H1 (cell line): ENCODE measurements at regions of chr6 and their contacts with region 1.

Region 1: GRCh38 chr6:134063966-134064445 is 11.6 kb upstream of the SLC2A12 start:
- DNase-seq: no peak
- H3K4me3 ChIP-seq: no peak overlapping the region
- H3K27ac ChIP-seq: no peak overlapping the region
- H3K4me1 ChIP-seq: peaks cover 2 to 12% (median 10%) of the 10 kb centered on the region in 4 experiments; a peak in 6 of 7 replicates
- H3K27me3 ChIP-seq: no peaks in the 10 kb centered on the region
- CTCF ChIP-seq: peak; percentile 61 to 97 (median 94)
- EP300 ChIP-seq: no peak
- POLR2A ChIP-seq: no peak
- RAD21 ChIP-seq: peak; percentile 75 to 83

Region 2: GRCh38 chr6:133923938-133924593 is 139.9 kb before region 1 on chr6:
- CTCF ChIA-PET with region 1: interaction called, 80 read pairs
- POLR2A ChIA-PET with region 1: no interaction called
- DNase-seq: peak in 1 of 2 experiments; percentile 60
- H3K4me3 ChIP-seq: peak overlapping the region in 1 of 4 experiments; percentile 27; a peak in 1 of 8 replicates
- H3K27ac ChIP-seq: no peak overlapping the region
- H3K4me1 ChIP-seq: peaks cover 0 to 3% (median 0%) of the 10 kb centered on the region in 4 experiments; a peak in 1 of 7 replicates
- H3K27me3 ChIP-seq: no peaks in the 10 kb centered on the region
- CTCF ChIP-seq: peak in 2 of 3 experiments; percentile 77 to 83; a peak in 3 of 4 replicates
- EP300 ChIP-seq: no peak
- POLR2A ChIP-seq: no peak
- RAD21 ChIP-seq: peak; percentile 96

Region 3: GRCh38 chr6:133959667-133960368 is 104.2 kb before region 1 on chr6:
- CTCF ChIA-PET with region 1: interaction called, 32 read pairs
- POLR2A ChIA-PET with region 1: interaction called, 3 read pairs
- DNase-seq: no peak
- H3K4me3 ChIP-seq: no peak overlapping the region
- H3K27ac ChIP-seq: no peak overlapping the region
- H3K4me1 ChIP-seq: peaks cover 0 to 4% (median under 1%) of the 10 kb centered on the region in 4 experiments; a peak in 2 of 7 replicates
- H3K27me3 ChIP-seq: no peaks in the 10 kb centered on the region
- CTCF ChIP-seq: no peak
- EP300 ChIP-seq: no peak
- POLR2A ChIP-seq: no peak
- RAD21 ChIP-seq: no peak

Region 4: GRCh38 chr6:133983099-133983939 is 80.7 kb before region 1 on chr6:
- CTCF ChIA-PET with region 1: interaction called, 156 read pairs
- POLR2A ChIA-PET with region 1: interaction called, 3 read pairs
- DNase-seq: no peak
- H3K4me3 ChIP-seq: no peak overlapping the region
- H3K27ac ChIP-seq: no peak overlapping the region
- H3K4me1 ChIP-seq: peaks cover 0 to 3% (median 0%) of the 10 kb centered on the region in 4 experiments; a peak in 2 of 7 replicates
- H3K27me3 ChIP-seq: no peaks in the 10 kb centered on the region
- CTCF ChIP-seq: no peak
- EP300 ChIP-seq: no peak
- POLR2A ChIP-seq: no peak
- RAD21 ChIP-seq: 0 out of 4 replicates have a peak, but pooled peaks of 1 of the 2 experiments have one; percentile 2

Region 5: DNA sequence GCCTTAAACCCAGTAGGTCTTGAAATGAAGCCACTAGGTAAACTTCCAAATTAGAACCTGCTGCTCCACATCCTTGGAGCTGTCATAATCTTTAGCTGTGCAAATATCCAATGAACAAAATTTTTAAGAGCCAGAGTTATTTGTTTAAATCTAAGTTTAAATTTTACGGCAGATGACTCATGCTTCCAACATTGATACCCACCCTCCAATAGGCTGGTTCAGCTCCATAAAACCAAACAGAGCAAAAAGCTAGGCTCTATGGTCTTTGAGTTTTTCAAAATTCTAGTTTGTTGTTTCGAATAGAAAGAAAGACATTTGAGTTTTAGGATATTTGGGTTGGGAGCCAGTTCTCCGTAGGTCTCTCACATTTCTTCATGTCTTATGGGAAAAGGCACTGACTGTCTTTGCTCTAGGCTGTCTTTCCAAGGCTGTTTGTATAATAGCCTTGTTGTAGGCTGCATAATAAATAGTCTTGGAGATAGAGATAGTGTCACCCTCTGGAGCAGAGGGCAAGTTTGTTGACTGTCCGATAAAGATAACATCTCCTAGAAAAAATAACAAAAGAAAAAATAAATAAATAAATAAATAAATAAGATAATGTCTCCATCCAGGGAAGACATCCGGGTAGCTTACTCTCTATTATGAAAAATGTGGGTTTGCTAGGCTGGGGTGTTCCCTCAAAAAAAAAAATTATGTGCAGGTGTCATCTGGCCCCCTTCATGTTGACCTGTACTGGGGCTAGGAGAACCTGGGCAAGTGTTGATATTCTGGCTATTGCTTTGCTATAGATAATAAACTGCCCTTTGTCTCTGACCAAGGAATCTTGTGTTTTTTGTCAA is 48.1 kb before region 1 on chr6:
- CTCF ChIA-PET with region 1: interaction called, 17 read pairs
- POLR2A ChIA-PET with region 1: interaction called, 4 read pairs
- DNase-seq: no peak
- H3K4me3 ChIP-seq: no peak overlapping the region
- H3K27ac ChIP-seq: no peak overlapping the region
- H3K4me1 ChIP-seq: peaks cover 0 to 3% (median 1%) of the 10 kb centered on the region in 4 experiments; a peak in 2 of 7 replicates
- H3K27me3 ChIP-seq: no peaks in the 10 kb centered on the region
- CTCF ChIP-seq: no peak
- EP300 ChIP-seq: no peak
- POLR2A ChIP-seq: no peak
- RAD21 ChIP-seq: no peak

Region 6: DNA sequence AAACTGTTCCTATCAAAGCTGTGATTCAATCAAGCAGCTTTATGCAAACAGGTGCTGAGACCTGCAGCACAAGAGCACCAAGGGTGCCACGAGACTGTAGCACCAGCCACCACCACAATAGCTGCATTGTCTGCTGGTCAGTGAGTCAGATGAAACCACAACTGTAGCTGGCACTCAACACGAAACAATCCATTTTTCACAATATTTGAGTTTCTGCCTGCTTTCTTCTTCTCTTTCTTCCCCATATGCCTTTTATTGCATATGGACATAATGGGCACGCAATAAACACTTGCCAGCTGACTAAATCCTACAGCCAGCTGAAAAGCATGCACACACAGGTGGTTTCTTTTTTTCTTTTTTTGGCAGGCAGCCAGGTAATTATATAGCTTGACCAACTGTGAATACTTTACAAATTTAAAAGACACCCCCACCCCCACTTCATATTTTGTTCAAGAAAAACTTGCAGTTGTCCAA is 28.1 kb before region 1 on chr6:
- CTCF ChIA-PET with region 1: interaction called, 32 read pairs
- POLR2A ChIA-PET with region 1: no interaction called
- DNase-seq: no peak
- H3K4me3 ChIP-seq: no peak overlapping the region
- H3K27ac ChIP-seq: no peak overlapping the region
- H3K4me1 ChIP-seq: peaks cover 0 to 6% (median 0%) of the 10 kb centered on the region in 4 experiments; a peak in 2 of 7 replicates
- H3K27me3 ChIP-seq: no peaks in the 10 kb centered on the region
- CTCF ChIP-seq: no peak
- EP300 ChIP-seq: no peak
- POLR2A ChIP-seq: no peak
- RAD21 ChIP-seq: no peak

Region 7: DNA sequence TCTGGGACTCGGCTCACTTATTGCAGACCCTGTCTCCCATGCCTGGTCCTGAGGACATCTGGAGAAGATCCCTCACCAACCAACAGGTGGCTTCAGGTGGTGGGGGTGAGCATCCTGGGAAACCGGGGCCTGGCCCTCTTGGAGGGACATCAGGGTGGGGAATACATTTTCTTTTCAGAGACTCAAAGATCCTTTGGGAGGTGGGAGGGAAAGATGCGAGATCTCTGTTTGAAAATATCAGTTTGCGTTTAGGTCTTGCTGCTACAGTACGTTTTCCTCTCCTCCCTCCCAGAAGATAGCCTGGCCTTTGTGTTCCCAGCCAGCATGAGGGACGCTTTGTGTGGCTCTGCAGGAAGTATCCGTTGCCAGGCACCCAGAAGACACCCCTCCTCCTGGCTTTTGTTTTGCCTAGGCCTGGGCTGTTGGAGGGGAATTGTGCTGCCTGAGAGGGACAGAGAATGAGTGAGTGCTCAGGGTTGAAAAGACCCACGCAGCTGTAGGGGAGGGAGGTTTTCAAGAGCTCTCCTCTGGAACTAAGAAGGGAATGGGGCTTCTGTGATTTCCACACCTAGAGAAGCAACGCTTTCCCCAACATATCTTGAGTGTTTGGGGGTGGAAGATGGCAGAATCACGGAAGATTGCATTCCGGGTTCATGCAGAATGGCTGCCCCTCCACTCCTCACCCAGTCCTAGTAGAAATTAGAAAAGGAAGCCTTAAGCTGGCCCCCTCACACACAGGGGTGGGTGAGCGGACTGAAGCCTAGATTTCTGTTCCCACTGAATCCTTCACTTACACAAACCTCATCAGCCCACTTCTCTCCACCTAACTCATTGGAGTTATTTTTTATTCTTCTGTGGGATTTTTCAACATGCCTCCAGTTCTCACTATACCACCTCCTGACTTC is 10.4 kb after region 1 on chr6:
- CTCF ChIA-PET with region 1: interaction called, 65 read pairs
- POLR2A ChIA-PET with region 1: interaction called, 6 read pairs
- DNase-seq: peak; percentile 72 to 78
- H3K4me3 ChIP-seq: peak overlapping the region in 3 of 4 experiments; percentile 14 to 42 (median 34); a peak in 5 of 8 replicates
- H3K27ac ChIP-seq: peak overlapping the region; percentile 69
- H3K4me1 ChIP-seq: peaks cover 4 to 13% (median 10%) of the 10 kb centered on the region in 4 experiments; a peak in 6 of 7 replicates
- H3K27me3 ChIP-seq: no peaks in the 10 kb centered on the region
- CTCF ChIP-seq: peak in 1 of 3 experiments; percentile 8; a peak in 1 of 4 replicates
- EP300 ChIP-seq: peak in 1 of 2 experiments; percentile 18; a peak in 1 of 3 replicates
- POLR2A ChIP-seq: peak in 1 of 2 experiments; percentile 89; a peak in 2 of 3 replicates
- RAD21 ChIP-seq: no peak